Activated CD4-positive, alpha-beta T cell treated with anti-CD3 and anti-CD28 coated beads, Interleukin-2, amount 10 ng/mL, durations not matched to agents 24 days and 14 days (primary cell): ENCODE measurements at regions of chr16 and their contacts with region 1.

Region 1: DNA sequence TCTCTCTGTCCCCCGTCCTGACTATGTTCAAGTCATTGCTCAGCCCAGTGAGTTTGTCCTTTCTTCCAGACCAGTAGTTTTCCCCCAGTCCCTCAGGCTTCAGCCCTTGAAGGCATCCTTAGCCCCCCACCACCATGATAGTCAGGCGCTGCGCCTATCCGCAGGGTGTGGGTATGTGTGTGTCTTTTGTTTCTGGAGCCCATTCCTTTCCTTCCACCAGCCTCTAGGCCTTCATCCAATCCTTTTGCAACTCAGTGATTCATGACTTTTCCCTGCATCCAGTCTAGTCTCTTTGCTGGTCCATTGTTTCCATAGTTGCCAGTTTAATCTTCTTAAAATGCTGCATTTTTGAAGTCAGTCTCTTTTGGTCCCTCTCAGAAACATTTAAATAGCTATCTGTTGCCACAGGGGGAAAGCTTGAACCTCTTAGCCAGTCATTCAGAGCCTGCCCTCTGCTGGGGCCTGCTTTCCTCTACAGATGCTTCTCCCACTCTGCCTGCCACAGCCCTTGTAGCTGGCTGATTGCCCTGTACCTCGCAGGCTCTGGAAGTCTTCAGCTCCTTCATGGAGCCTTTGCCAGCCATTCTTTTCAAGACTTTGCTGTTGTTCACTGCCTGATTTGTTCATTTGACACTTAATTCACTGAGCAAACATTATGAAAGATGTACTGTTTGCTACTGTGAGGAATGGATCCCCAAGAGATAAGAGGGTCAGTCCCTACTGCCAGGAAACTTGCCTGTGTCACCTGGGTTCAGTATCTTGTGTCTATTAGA is 55.9 kb upstream of the ADCY7 start:
- DNase-seq: peak; percentile 90
- H3K4me3 Mint-ChIP-seq: no peak overlapping the region
- H3K27ac Mint-ChIP-seq: peak overlapping the region; percentile 51
- H3K4me1 Mint-ChIP-seq: peaks cover 23% of the 10 kb centered on the region
- H3K27me3 Mint-ChIP-seq: no peaks in the 10 kb centered on the region

Region 2: DNA sequence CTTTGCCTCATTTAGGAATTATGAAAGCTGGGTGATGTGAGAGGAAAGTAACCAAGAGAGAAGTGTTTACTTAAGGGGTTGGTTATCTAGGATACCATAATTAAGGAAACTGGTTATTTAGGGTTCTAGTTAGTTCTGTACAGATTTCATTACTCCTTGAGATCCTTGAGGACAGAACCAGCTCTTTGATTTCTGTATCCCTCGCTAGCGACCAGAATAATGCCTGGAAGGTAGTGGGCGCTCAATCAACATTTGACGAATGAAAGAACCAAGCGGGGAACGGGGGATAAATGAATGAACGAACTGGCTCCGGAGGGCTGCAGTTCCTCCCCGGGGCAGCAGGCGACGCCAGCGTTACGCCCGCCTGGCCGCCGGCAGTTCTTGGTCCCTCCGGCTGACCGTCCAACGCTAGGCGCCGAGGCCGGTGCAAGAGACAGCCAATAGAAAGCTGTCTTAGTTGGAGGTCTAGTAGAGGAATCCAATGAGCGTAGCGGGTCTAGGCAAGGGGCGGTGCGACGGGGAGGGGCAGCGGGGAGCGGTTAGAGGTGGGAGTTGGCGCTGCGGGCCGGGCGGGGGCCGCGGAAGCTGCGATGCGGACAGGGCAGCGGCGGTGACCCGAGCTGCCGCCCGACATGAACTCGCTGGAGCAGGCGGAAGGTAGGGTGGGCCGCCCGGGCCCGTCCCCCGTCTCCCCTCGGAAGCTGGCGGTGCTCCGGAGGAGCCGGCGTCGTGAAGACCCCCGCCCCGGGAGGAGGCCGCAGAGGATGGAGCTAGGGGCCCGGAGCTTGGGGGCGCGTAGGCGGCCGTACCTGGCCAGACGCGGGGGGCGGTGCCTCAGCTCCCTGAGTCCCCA is 185.5 kb before region 1 on chr16 and contains the start of gene CNEP1R1:
- intact Hi-C with region 1: loop called (anchors 1 kb)
- DNase-seq: peak; percentile 98
- H3K4me3 Mint-ChIP-seq: peak within 1 kb of the TSS; percentile 97
- H3K27ac Mint-ChIP-seq: peak within 1 kb of the TSS; percentile 88
- H3K4me1 Mint-ChIP-seq: peaks cover 17% of the 10 kb centered on the region
- H3K27me3 Mint-ChIP-seq: peaks cover 11% of the 10 kb centered on the region
- total RNA-seq, gene CNEP1R1: 22.3 and 23.0 TPM in 2 replicates

Region 3: DNA sequence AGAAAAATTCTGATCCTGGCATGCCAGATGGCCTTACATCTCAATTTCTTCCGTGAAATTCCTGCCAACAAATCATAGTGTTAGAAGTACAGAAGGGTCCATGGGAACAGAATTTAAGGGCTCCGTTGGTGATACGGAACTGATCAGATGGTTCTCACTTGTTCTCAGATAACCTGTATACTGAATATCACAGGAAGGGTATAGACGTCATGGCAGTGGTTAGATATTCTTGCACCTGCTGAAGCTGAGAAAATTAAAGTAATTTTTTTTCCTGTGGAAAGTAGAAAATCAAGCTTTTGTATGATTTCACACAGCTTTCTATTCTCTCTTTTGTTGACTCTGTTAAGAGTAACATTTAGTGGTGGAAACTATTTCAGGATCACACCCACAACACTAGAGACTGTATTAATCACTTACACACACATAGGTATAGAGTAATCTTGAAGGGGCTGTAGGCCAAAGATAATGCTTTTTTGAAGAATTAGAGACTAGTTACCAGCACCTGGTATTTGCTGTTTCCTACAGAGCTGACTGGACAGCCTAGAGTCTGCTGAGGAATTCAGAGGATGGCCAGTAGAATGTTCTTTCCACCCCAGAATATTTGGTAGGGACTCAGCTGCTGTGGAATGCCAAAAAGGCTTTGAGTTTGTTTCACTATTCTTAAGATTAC is 49.8 kb before region 1 on chr16:
- intact Hi-C with region 1: loop called (anchors 2 kb)
- DNase-seq: no peak
- H3K4me3 Mint-ChIP-seq: no peak overlapping the region
- H3K27ac Mint-ChIP-seq: peak overlapping the region; percentile 32
- H3K4me1 Mint-ChIP-seq: peaks cover 45% of the 10 kb centered on the region
- H3K27me3 Mint-ChIP-seq: no peaks in the 10 kb centered on the region

Region 4: DNA sequence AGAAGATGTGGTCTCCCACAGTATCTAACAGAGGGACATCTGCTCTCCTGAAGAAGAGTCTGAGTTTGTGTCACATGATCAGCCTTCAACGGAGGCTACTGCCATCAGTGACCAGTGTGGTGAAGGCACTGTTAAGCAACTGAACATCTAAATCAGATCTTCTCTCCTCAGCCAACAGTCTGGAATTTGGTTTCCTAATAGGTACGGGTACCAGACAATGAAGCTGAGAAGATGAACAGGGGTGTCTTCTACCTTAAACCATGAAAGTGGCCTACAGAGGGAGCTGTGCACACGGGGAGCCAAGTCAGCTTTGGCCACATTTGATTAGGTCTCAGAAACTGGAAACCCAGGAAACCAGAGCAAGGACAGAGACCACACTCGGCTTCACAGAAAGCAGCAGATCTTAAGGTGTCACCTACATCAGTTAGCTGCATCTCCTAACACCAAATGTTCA is 116.5 kb after region 1 on chr16:
- intact Hi-C with region 1: loop called (anchors 5 kb)
- DNase-seq: peak; percentile 92
- H3K4me3 Mint-ChIP-seq: peak overlapping the region; percentile 13
- H3K27ac Mint-ChIP-seq: peak overlapping the region; percentile 61
- H3K4me1 Mint-ChIP-seq: peaks cover 40% of the 10 kb centered on the region
- H3K27me3 Mint-ChIP-seq: no peaks in the 10 kb centered on the region

Region 5: DNA sequence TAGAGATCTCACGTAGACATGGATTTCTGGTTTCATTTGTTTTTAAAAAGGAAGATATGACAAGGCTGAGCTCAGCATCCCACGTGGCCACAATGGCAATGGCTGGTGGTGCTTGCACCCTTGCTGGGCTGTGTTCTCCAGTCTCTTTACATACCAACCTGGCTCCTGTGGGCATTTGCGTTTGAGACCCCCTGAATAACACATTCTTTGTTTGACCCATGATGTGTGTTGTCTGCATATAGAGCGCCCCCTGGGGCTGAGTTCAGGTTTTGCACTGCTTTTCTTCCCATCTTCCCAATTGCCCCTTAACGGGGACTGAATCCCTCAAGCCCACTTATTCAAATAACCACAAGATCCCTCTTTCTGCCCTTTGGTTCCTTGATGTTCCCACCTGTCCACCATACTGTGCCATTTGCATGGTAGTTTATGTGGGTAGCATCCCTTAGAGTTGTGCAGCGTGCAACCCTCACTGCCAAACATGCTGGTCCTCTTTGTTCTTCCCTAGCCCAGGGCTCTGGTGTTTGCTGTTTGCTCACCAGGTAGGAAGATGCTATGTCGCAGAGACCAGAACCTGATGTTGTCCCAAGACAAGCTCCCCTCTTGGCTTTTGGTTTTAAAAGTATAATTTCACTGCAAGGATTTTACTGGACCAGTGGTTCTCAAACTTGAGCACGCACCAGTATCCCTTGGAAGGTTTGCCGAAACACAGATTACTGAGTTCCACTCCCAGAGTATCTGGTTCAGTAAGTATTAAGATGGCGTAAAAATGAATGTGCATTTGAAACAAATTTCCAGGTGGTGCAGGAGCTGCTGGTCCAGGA is 299.3 kb after region 1 on chr16:
- intact Hi-C with region 1: loop called (anchors 10 kb)
- DNase-seq: peak; percentile 83
- H3K4me3 Mint-ChIP-seq: no peak overlapping the region
- H3K27ac Mint-ChIP-seq: no peak overlapping the region
- H3K4me1 Mint-ChIP-seq: no peaks in the 10 kb centered on the region
- H3K27me3 Mint-ChIP-seq: peaks cover 2% of the 10 kb centered on the region

Region 6: GRCh38 chr16:50613281-50613963 is 403.0 kb after region 1 on chr16:
- intact Hi-C with region 1: no loop called
- DNase-seq: no peak
- H3K4me3 Mint-ChIP-seq: no peak overlapping the region
- H3K27ac Mint-ChIP-seq: no peak overlapping the region
- H3K4me1 Mint-ChIP-seq: peaks cover 11% of the 10 kb centered on the region
- H3K27me3 Mint-ChIP-seq: no peaks in the 10 kb centered on the region